Natural killer cell (primary cell): ENCODE measurements at regions of chr20 and their contacts with region 1.

Region 1: GRCh38 chr20:10219452-10219791 is 792 bp downstream of the SNAP25 start:
- DNase-seq: peak; percentile 75 to 78
- ATAC-seq: peak; percentile 97 to 98 (median 98)
- H3K4me3 ChIP-seq: no peak overlapping the region
- H3K4me3 Mint-ChIP-seq: no peak overlapping the region
- H3K27ac ChIP-seq: no peak overlapping the region
- H3K27ac Mint-ChIP-seq: no peak overlapping the region
- H3K4me1 ChIP-seq: peaks cover 17% of the 10 kb centered on the region
- H3K4me1 Mint-ChIP-seq: peaks cover 17 to 18% of the 10 kb centered on the region in 2 donors
- H3K27me3 ChIP-seq: peaks cover 30% of the 10 kb centered on the region
- H3K27me3 Mint-ChIP-seq: peaks cover 36% of the 10 kb centered on the region in 2 donors
- CTCF ChIP-seq: no peak

Region 2: GRCh38 chr20:10034717-10035571 is 184.5 kb before region 1 on chr20 and contains the start of gene ANKEF1:
- intact Hi-C with region 1: no loop called
- DNase-seq: peak; percentile 68 to 91
- ATAC-seq: peak; percentile 96 to 97 (median 97)
- H3K4me3 ChIP-seq: peak within 1 kb of the TSS; percentile 42
- H3K4me3 Mint-ChIP-seq: peak within 1 kb of the TSS; percentile 78
- H3K27ac ChIP-seq: peak within 1 kb of the TSS; percentile 49
- H3K27ac Mint-ChIP-seq: peak within 1 kb of the TSS in 1 of 2 donors; percentile 65
- H3K4me1 ChIP-seq: peaks cover 9% of the 10 kb centered on the region
- H3K4me1 Mint-ChIP-seq: peaks cover 8 to 10% of the 10 kb centered on the region in 2 donors
- H3K27me3 ChIP-seq: peaks cover 5% of the 10 kb centered on the region
- H3K27me3 Mint-ChIP-seq: peaks cover 14 to 24% of the 10 kb centered on the region in 2 donors
- CTCF ChIP-seq: no peak
- total RNA-seq, gene ANKEF1: 1.6 to 1.9 (median 1.8) TPM

Region 3: DNA sequence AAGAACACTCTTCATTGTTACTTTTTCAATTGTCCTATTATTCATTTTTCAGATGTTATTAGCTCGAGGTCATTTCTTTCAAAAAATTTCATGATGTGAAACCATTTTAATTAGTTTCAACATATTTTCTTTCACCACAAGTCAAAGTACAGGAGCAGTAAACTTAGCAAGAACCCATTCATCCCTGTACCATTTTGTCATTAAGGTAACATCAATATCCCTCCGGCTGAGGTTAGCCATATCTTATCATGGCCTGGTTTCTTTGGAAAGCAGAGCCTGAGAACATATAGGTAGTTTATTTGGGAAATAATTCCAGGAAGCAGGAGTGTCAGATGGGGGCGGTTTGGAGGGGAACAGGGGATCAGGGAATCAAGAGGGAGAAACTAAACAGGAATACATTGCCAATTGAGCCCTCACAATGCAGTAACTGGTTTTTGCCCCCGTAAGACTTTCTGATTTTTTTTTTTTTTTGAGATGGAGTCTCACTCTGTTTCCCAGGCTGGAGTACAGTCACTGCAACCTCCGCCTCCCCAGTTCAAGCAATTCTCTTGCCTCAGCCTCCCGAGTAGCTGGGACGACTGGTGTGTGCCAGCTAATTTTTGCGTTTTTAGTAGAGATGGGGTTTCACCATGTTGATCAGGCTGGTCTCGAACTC is 130.9 kb after region 1 on chr20:
- intact Hi-C with region 1: loop called (anchors 2 kb)
- DNase-seq: no peak
- ATAC-seq: no peak
- H3K4me3 ChIP-seq: no peak overlapping the region
- H3K4me3 Mint-ChIP-seq: peak overlapping the region; percentile 84
- H3K27ac ChIP-seq: peak overlapping the region; percentile 95
- H3K27ac Mint-ChIP-seq: peak overlapping the region; percentile 92 to 94
- H3K4me1 ChIP-seq: peaks cover 20% of the 10 kb centered on the region
- H3K4me1 Mint-ChIP-seq: peaks cover 37 to 39% of the 10 kb centered on the region in 2 donors
- H3K27me3 ChIP-seq: no peaks in the 10 kb centered on the region
- H3K27me3 Mint-ChIP-seq: no peaks in the 10 kb centered on the region
- CTCF ChIP-seq: no peak